ENCODE measurements at regions of chr10 and their contacts with region 1.

Region 1: GRCh38 chr10:101018600-101019439 is 12.1 kb downstream of the PDZD7 start:
- DNase-seq: peak; percentile 88
- H3K4me3 Mint-ChIP-seq: no peak overlapping the region
- H3K27ac Mint-ChIP-seq: no peak overlapping the region
- H3K4me1 Mint-ChIP-seq: peaks cover 3% of the 10 kb centered on the region
- H3K27me3 Mint-ChIP-seq: peaks cover 86% of the 10 kb centered on the region

Region 2: GRCh38 chr10:100998991-100999741 is 19.7 kb before region 1 on chr10:
- CTCF ChIA-PET with region 1: interaction called, 169 read pairs
- DNase-seq: peak; percentile 82
- H3K4me3 Mint-ChIP-seq: peak overlapping the region; percentile 84
- H3K27ac Mint-ChIP-seq: peak overlapping the region; percentile 89
- H3K4me1 Mint-ChIP-seq: peaks cover 29% of the 10 kb centered on the region
- H3K27me3 Mint-ChIP-seq: peaks cover 8% of the 10 kb centered on the region

Region 3: DNA sequence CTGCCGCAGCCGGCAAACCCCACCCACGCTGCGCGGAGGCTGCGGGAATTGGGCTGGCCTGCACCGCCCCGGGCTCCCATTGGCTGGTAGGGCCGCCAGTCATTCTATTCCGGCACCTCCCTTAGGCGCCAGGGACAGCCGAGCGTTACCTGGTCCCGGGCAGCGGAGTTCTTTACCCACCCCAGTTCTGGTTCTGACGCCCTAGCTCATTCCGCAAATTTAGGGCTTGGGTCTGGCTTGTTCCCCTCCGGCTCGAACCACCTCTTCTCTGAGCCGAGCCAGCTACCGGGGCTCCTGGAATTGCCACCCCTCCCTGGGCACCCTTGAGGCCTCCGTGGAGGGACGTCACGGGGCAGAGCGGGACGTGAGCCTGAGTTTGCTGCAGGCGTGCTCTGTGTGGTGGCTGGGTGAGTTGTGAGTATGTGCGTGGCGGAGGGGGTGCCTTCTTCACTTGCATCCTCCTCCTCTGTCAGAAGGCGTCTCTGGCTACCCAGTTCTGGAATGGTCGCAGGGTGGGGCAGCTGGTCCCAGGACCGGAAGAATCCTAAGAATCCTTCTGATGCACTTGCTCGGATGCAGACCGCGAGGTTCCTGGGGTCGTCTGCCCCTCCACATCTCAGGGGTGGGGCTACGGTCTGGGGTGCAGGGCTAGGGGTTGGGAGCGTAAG is 12.4 kb after region 1 on chr10 and contains the starts of genes PDZD7 and SFXN3:
- CTCF ChIA-PET with region 1: interaction called, 98 read pairs
- DNase-seq: peak; percentile 98
- H3K4me3 Mint-ChIP-seq: peak within 1 kb of the TSS; percentile 81
- H3K27ac Mint-ChIP-seq: peak within 1 kb of the TSS; percentile 96
- H3K4me1 Mint-ChIP-seq: peaks cover 25% of the 10 kb centered on the region
- H3K27me3 Mint-ChIP-seq: peaks cover 42% of the 10 kb centered on the region

Region 4: DNA sequence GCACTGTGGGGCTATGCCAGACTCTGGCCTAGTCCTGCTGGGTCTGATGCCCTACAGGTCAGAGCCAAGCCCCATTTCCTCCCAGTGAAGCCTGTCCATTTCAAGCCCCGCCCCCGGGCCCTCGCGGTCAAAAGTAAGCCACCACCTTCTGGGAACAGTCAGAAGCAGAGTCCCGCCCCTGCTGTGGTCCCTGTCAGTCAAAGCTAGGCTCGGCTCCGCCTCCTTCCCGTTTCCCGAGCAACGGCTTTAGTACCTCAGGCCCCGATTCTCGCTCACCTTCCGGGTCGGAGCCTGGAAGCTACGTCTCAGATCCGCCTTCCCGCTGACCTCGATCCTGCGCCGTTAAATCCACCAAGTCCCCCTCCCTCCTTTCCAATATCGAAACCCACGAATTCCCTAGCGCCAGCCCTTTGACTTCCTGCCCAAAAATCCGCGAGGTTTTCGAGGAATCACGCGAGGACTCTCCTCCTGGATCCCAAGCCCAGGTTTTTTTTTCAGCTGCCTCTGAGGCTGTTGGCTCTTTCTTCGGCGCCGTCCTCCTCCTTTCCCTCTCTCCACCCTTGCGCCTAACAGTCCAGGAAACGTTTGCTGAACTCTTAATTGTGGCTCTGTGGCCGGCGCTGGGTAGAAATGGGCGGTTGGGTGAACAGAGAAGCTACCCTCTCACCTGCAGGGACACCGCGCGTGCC is 24.0 kb after region 1 on chr10:
- CTCF ChIA-PET with region 1: interaction called, 30 read pairs
- DNase-seq: peak; percentile 93
- H3K4me3 Mint-ChIP-seq: peak overlapping the region; percentile 96
- H3K27ac Mint-ChIP-seq: peak overlapping the region; percentile 78
- H3K4me1 Mint-ChIP-seq: peaks cover 31% of the 10 kb centered on the region
- H3K27me3 Mint-ChIP-seq: peaks cover 48% of the 10 kb centered on the region

Region 5: GRCh38 chr10:101050208-101051069 is 31.6 kb after region 1 on chr10:
- CTCF ChIA-PET with region 1: interaction called, 18 read pairs
- DNase-seq: peak; percentile 86
- H3K4me3 Mint-ChIP-seq: no peak overlapping the region
- H3K27ac Mint-ChIP-seq: no peak overlapping the region
- H3K4me1 Mint-ChIP-seq: peaks cover 33% of the 10 kb centered on the region
- H3K27me3 Mint-ChIP-seq: peaks cover 56% of the 10 kb centered on the region

Region 6: DNA sequence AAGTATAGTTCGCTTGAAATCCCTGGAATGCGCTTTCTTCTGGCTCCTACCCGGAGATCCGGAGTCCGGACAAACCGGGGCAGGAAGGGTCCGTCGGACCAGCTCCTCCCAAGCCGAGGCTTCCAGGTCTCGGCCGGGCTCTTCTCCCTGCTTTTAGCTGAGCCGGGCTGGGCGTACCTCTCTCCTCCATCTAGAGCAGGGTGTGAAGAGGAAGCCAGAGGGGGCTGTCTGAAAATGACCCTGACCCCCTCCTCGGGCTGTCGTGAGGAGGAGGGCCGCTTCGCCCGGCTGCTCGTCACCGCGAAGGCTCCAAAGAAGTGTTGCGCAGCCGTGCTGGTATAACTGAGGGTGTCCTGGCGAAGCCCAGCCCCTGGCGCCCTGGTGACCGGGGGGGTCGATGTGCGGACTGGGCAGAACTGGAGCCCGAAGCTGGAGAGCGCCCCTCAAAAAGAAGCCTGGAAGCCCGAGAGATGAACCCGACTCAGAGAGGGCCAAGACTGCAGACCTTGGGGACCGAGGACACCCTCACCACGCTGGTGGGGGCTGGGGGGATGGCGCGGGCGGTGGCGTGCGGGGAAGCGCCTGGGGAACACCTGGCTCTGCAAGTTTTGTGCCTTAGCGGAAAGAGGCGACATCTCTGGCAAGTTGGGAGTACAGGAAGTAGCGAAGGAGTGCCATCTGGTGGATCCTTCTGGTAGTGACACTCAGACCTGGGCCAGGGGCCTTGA is 48.7 kb after region 1 on chr10:
- CTCF ChIA-PET with region 1: interaction called, 45 read pairs
- DNase-seq: peak; percentile 87
- H3K4me3 Mint-ChIP-seq: peak overlapping the region; percentile 67
- H3K27ac Mint-ChIP-seq: no peak overlapping the region
- H3K4me1 Mint-ChIP-seq: peaks cover 30% of the 10 kb centered on the region
- H3K27me3 Mint-ChIP-seq: peaks cover 78% of the 10 kb centered on the region

Region 7: DNA sequence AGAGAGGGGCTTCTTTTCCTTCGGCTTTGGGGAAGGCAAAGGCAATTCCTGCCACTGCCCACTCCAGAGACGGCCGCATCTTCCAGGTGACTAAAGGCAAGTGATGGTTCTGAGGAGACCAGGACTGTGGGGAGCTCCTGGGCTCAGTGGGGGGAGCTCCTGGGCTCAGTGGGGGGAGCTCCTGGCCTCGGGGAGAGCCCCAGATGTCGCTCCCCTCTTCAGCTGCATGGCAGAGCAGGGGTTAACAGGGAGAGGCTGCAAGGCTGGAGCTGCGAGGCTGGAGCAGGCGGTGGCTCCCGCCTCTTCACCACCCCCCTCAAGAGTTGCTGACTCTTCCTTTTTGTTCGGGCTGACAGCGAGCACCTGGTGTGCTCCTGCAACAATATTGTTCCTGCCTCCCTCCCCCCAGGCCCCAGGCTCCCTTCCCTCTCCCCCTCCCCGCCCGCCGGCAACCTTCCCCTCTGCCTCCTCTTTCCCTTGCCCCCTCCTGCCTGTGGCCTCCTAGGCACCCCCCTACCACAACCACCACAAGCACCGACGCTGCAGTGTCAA is 266.8 kb after region 1 on chr10:
- CTCF ChIA-PET with region 1: no interaction called
- DNase-seq: no peak
- H3K4me3 Mint-ChIP-seq: no peak overlapping the region
- H3K27ac Mint-ChIP-seq: no peak overlapping the region
- H3K4me1 Mint-ChIP-seq: no peaks in the 10 kb centered on the region
- H3K27me3 Mint-ChIP-seq: peaks cover 95% of the 10 kb centered on the region

Measured in activated naive CD4-positive, alpha-beta T cell treated with anti-CD3 and anti-CD28 coated beads, Interleukin-2, amount 10 ng/mL, durations not matched to agents 7 days and 5 days (primary cell).